Thyroid gland (tissue), 4 donors: ENCODE measurements at regions of chr2 and their contacts with region 1.

Region 1: GRCh38 chr2:230798769-230799399 is 65.9 kb upstream of the ITM2C start:
- DNase-seq: peak in 1 of 2 donors; percentile 12
- H3K4me3 ChIP-seq: no peak overlapping the region
- H3K27ac ChIP-seq: no peak overlapping the region
- H3K4me1 ChIP-seq: peaks cover 0 to 8% of the 10 kb centered on the region in 2 donors
- H3K27me3 ChIP-seq: no peaks in the 10 kb centered on the region
- CTCF ChIP-seq: peak; percentile 19 to 71 (median 55)
- POLR2A ChIP-seq: no peak

Region 2: DNA sequence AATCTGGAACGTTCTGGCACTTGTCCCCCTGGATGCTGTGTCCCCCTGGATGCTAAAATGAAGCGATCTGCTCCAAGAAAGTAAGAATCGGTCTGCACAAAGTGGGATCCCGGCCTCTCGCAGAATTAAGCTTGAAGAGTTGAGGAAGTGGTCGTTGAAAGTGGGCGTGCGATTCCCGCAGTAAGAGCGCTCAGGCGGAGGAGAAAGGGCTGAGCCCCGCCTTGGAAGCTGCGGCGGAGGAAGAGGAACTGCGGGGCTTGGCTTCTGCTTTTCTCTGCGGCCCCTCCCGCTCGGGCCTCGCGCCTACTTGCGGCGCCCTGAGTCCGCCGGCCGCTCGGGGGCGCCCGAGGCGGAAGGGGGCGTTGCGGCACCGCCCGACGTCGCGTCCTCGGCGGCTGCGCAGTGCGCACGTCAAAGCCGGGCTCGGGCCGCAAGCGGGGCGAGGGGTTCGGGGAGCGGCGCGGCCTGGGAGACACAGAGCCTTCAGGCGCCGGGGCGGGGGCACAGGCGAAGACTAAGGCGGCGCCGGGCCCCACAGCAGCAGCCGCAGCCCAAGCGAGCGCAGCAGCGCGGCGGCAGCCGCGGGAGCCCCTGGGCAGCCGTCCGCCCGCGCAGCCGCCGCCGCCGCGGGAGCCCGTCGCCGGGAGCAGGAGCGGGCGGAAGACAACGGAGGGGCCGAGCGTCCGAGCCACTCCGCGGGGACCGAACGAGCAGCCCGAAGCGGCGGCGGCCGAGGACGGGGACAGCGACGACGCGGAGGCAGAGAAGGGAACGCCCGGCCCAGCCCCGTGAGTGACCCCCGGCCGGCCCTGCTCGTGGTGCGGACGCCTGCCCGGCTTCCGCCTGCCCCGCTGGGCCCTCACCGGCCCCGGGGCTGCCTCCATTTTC is 86.2 kb before region 1 on chr2 and contains the start of gene CAB39:
- intact Hi-C with region 1: loop called (anchors 5 kb)
- DNase-seq: peak; percentile 82 to 85
- H3K4me3 ChIP-seq: peak within 1 kb of the TSS; percentile 37 to 95 (median 80)
- H3K27ac ChIP-seq: peak within 1 kb of the TSS; percentile 26 to 90 (median 85)
- H3K4me1 ChIP-seq: peaks cover 15 to 25% of the 10 kb centered on the region in 2 donors
- H3K27me3 ChIP-seq: no peaks in the 10 kb centered on the region
- CTCF ChIP-seq: peak; percentile 31 to 97 (median 78)
- POLR2A ChIP-seq: peak in 1 of 2 donors; percentile 88
- total RNA-seq, gene CAB39: 70.8 to 97.6 (median 87.4) TPM

Region 3: DNA sequence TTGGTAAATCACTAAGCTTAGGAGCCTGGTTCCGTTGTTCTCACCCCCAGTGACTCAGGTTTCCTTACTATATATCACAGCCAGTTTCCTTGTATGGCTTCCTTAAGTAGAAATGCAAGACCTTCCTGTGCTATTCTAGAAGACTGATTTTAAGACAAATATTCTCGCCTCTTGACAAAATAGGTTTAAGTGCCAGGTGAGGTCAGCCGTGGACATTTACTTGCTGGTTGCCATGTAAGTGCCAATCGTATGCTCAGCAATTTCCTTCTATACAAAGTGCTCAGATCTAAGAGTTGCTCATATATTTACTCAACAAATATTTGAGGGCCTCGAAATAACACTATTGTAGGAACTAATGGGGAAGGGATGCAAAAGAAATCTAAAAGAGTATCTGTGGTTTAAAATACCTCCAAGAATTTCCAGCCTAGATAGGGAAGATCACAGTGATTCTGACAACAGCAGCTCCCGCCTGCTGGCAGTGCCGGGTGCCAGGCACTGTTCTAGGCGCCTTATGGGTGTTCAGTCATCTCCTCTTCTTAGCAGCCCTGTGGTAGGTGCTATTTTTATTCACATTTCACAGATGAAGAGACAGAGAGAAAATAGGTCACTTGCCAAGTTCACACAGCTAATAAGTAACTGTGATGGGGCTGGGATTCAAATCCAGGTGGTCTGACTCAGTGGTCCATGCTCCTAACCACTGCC is 501.3 kb after region 1 on chr2:
- intact Hi-C with region 1: no loop called
- DNase-seq: no peak
- H3K4me3 ChIP-seq: no peak overlapping the region
- H3K27ac ChIP-seq: no peak overlapping the region
- H3K4me1 ChIP-seq: no peaks in the 10 kb centered on the region
- H3K27me3 ChIP-seq: no peaks in the 10 kb centered on the region
- CTCF ChIP-seq: no peak
- POLR2A ChIP-seq: no peak